A673 (cell line): ENCODE measurements at regions of chr5 and their contacts with region 1.

Region 1: DNA sequence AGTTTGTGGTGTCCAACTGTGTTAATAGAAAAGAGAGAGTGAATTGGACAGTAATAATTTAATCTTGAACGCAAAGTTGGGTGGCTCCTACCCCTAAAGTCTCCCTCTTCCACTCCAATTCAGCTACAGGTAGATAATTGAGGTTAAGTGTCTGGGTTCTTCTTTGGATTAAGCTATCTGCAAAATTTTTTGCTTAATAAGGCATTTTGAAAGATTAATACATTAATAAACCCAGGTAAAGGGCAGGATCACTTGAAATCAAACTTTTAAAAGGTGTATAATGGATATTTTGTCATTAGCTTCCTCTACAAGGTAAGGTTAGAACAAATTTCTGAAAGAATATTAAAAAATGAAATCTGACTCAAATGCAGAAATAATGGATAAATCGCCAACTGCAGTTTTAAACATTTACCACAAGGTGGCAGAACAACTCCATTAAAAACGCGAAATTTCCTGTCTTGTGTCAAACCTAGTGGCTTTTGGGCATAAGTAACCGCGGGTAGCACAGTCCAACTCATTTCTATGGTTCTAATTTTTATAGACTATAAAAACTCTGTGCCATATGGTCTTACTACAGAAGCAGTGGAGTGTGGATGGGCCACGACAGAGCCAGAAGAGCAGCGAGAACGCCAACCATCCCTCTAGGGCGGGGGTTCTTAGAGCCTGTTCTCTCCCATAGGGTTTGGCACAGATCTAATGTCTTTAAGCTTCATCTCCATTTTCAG is 276.5 kb downstream of the ARHGEF28 start:
- DNase-seq: peak; percentile 71
- H3K4me3 ChIP-seq: no peak overlapping the region
- H3K27ac ChIP-seq: no peak overlapping the region
- H3K4me1 ChIP-seq: no peaks in the 10 kb centered on the region
- H3K27me3 ChIP-seq: peaks cover 97% of the 10 kb centered on the region
- CTCF ChIP-seq: peak; percentile 81

Region 2: DNA sequence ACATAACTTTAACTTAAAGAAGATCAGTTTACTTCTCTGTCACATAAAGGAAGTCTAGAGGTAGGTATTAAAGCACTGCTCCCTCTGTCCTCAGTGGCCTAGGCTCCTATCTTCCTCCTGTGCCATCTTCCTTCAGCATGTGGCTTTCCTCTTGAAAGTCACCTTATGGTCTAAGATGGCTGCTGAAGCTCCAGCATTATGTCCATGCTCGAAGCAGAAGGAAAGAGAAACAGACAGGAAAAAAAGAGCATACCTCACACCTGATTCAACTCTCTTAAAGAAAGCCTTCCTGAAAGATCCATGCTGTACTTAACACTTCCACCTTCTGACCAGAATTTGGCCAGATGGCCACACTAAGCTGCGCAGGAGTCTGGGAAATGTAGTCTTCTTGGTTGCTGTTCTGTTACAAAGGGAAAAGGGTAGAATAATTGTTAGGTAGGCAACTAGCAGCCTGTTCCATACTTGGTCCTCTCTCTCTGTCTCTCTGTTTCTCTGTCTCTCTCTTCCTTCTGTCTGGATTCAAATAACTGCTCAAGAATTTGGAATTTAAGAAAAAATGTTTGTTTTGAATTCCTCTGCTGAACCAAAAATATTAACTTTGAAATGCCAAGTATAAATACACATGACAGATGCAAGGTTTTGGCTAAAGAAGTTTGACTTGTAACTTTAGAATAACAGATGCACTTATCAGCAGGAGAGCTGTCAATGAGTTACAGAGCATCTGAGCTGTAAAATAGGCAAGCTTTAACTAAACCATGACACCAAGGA is 713.5 kb before region 1 on chr5:
- CTCF ChIA-PET with region 1: no interaction called
- POLR2A ChIA-PET with region 1: no interaction called
- intact Hi-C with region 1: no loop called
- DNase-seq: no peak
- H3K4me3 ChIP-seq: no peak overlapping the region
- H3K27ac ChIP-seq: no peak overlapping the region
- H3K4me1 ChIP-seq: no peaks in the 10 kb centered on the region
- H3K27me3 ChIP-seq: no peaks in the 10 kb centered on the region
- CTCF ChIP-seq: no peak

Region 3: GRCh38 chr5:73591102-73591695 is 311.3 kb before region 1 on chr5:
- CTCF ChIA-PET with region 1: no interaction called
- POLR2A ChIA-PET with region 1: no interaction called
- intact Hi-C with region 1: loop called (anchors 2 kb)
- DNase-seq: peak; percentile 84
- H3K4me3 ChIP-seq: no peak overlapping the region
- H3K27ac ChIP-seq: no peak overlapping the region
- H3K4me1 ChIP-seq: no peaks in the 10 kb centered on the region
- H3K27me3 ChIP-seq: no peaks in the 10 kb centered on the region
- CTCF ChIP-seq: peak; percentile 83

Region 4: DNA sequence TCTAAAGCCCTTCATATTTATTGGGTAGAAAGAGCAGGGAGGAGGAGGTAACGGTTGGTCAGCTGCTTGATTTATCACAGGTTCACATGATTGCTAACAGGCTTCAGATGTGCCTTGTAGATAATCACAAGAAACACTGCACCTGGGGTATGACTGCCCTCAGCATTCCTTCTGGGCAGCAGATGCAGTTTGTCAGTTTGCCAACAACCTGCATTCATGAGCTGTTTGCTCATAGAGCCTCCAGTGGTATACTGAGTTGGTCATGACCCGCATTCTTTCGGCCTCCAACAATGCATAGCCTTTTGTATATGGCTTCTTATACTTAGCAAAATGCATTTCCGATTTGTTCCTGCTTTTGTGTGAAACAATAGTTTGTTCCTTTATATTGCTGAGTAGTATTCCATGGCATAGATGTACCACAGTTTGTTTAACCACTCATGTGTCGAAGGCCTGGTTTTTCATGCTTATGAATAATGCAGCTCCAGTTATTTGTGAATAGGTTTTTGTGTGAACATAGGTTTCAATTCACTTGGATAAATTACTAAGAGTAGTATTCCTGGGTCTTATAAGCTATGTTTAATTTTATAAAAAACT is 192.9 kb before region 1 on chr5:
- CTCF ChIA-PET with region 1: no interaction called
- POLR2A ChIA-PET with region 1: no interaction called
- intact Hi-C with region 1: no loop called
- DNase-seq: no peak
- H3K4me3 ChIP-seq: no peak overlapping the region
- H3K27ac ChIP-seq: no peak overlapping the region
- H3K4me1 ChIP-seq: no peaks in the 10 kb centered on the region
- H3K27me3 ChIP-seq: peaks cover 2% of the 10 kb centered on the region
- CTCF ChIP-seq: no peak

Region 5: DNA sequence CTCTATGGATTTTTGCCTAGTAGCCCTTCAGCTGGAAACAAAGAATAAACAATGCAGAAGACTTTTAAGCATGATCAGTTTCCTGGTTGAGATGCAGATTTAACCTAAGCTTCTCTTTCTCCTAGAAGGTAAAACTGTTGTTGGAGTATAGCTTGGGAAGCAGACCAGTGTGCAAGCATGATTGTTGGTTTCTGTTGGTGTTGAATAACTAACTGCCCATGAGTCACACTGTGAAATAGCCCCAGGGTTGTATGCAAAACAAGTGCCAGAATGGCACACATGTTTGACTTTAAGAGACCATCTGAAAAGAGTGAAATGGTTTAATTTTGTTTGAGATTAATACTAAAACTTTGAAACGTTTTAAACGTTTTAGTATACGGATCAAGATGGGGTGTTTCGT is 49.4 kb before region 1 on chr5:
- CTCF ChIA-PET with region 1: no interaction called
- POLR2A ChIA-PET with region 1: no interaction called
- intact Hi-C with region 1: no loop called
- DNase-seq: peak; percentile 8
- H3K4me3 ChIP-seq: no peak overlapping the region
- H3K27ac ChIP-seq: no peak overlapping the region
- H3K4me1 ChIP-seq: no peaks in the 10 kb centered on the region
- H3K27me3 ChIP-seq: no peaks in the 10 kb centered on the region
- CTCF ChIP-seq: no peak

Region 6: GRCh38 chr5:74648835-74649293 is 746.4 kb after region 1 on chr5:
- CTCF ChIA-PET with region 1: interaction called, 10 read pairs
- POLR2A ChIA-PET with region 1: no interaction called
- intact Hi-C with region 1: loop called (anchors 1 kb)
- DNase-seq: peak; percentile 75
- H3K4me3 ChIP-seq: no peak overlapping the region
- H3K27ac ChIP-seq: no peak overlapping the region
- H3K4me1 ChIP-seq: no peaks in the 10 kb centered on the region
- H3K27me3 ChIP-seq: peaks cover 9% of the 10 kb centered on the region
- CTCF ChIP-seq: peak; percentile 74

Region 7: GRCh38 chr5:74919487-74919886 is 1017.0 kb after region 1 on chr5:
- CTCF ChIA-PET with region 1: no interaction called
- POLR2A ChIA-PET with region 1: no interaction called
- intact Hi-C with region 1: loop called (anchors 5 kb)
- DNase-seq: peak; percentile 72
- H3K4me3 ChIP-seq: no peak overlapping the region
- H3K27ac ChIP-seq: no peak overlapping the region
- H3K4me1 ChIP-seq: no peaks in the 10 kb centered on the region
- H3K27me3 ChIP-seq: no peaks in the 10 kb centered on the region
- CTCF ChIP-seq: peak; percentile 72

Region 8: DNA sequence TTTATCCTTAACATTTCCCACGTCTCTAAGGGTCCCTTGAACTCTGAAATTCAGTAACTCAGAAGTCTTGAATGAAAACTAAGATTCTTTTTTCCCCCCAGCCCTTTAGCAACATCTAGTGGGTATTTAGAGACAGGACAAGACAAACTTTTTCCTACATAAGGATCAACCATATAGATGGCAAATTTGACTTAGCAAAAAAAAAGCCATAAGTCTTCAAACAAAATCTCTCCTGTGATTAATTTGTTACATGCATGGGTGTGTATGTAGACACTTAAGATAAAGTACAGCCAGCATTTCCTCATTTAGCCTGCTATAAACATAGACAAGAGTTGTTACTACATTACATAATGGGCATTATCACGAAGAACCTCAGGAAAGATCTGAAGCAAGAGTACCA is 1363.2 kb after region 1 on chr5:
- CTCF ChIA-PET with region 1: no interaction called
- POLR2A ChIA-PET with region 1: no interaction called
- intact Hi-C with region 1: loop called (anchors 10 kb)
- DNase-seq: peak; percentile 68
- H3K4me3 ChIP-seq: no peak overlapping the region
- H3K27ac ChIP-seq: no peak overlapping the region
- H3K4me1 ChIP-seq: no peaks in the 10 kb centered on the region
- H3K27me3 ChIP-seq: no peaks in the 10 kb centered on the region
- CTCF ChIP-seq: peak; percentile 66